AG04450 (cell line): ENCODE measurements at regions of chr9 and their contacts with region 1.

Region 1: DNA sequence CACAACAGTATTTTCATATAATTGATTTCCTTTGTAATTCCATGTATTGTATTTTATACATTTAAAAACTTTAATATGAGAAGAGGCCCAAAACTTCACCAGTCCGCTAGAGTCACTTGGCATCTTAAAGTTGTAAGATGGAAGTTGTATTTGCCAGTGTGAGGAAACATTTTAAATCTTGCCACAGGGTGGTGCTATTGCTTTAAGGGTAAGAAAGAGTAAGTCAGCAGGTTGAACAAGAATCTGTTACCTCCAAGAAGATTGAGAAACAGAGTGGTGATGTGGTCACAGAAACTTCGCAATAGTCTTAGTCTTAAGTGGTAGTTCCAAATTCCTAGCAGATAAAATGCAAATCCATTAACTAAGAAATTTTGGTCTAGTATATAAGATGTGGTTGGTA is 39.8 kb upstream of the RANBP6 start:
- DNase-seq: peak; percentile 79
- H3K4me3 ChIP-seq: no peak overlapping the region
- H3K27ac ChIP-seq: no peak overlapping the region
- H3K27me3 ChIP-seq: peaks cover 2% of the 10 kb centered on the region
- CTCF ChIP-seq: peak; percentile 71

Region 2: DNA sequence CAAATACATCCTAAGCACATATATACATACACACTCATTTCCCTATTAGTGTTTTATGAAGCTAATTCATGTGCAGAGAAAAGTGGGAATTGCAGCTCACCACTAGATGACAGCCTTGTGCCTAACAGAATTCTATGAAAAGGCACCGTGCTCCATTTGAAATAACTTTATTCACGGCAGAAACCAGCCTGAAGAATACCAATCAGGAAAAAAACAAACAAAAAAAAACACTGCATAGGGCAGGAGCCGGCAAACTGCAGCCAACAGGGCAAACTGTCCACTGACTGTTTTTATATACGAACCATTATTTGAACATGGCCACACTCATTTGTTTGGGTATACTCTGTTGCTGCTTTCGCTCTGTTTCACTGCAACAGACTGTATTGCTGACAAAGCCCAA is 255.9 kb before region 1 on chr9:
- CTCF ChIA-PET with region 1: interaction called, 19 read pairs
- POLR2A ChIA-PET with region 1: no interaction called
- DNase-seq: peak; percentile 18
- H3K4me3 ChIP-seq: no peak overlapping the region
- H3K27ac ChIP-seq: no peak overlapping the region
- H3K27me3 ChIP-seq: no peaks in the 10 kb centered on the region
- CTCF ChIP-seq: peak; percentile 89

Region 3: DNA sequence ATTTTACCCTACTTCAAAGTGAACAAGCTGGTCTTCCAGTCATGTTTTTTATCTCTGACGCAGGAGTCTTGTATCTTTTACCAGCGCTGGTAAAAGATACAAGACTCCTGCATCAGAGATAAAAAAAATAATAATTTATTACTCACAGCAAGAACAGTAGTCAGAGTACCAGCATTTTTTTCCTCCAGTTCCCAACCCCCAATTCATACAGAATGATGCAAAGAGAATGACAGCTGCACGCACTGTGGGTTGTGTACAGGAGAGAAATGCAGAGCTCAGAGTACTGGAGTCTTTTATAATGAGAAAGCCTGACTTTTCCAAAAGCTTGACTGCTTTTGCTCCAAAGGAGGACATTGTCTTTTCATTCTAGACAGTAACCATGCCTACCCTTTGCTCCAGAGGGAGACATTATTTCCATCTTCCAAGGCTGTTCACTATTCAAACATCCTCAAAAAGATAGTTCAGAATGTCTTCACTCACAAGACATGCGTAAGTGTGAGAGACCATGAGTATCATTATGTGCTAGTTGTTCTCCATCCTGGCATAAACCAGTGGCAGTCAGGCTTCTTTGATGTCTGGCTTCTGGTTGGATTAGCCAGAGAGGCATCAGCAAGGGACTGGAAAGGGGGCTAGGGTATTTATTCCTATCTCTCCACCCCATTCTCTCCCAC is 25.5 kb before region 1 on chr9:
- CTCF ChIA-PET with region 1: interaction called, 13 read pairs
- POLR2A ChIA-PET with region 1: no interaction called
- DNase-seq: no peak
- H3K4me3 ChIP-seq: no peak overlapping the region
- H3K27ac ChIP-seq: no peak overlapping the region
- H3K27me3 ChIP-seq: peaks cover 5% of the 10 kb centered on the region
- CTCF ChIP-seq: no peak

Region 4: DNA sequence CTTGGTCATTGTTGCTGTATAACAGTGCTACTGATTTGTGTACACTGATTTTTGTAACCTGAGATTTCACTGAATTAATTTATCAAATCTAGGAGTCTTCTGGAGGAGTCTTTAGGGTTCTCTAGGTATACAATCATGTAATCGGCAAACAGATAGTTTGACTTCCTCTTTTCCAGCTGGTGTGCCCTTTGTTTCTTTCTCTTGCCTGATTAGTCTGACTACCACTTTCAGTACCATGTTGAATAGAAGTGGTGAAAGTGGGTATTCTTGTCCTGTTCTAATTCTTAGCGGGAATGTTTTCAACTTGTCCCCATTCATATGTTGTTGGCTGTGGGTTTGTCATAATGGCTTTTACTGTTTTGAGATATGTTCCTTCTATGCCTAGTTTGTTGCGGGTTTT is 15.1 kb before region 1 on chr9:
- CTCF ChIA-PET with region 1: interaction called, 16 read pairs
- POLR2A ChIA-PET with region 1: no interaction called
- DNase-seq: no peak
- H3K4me3 ChIP-seq: no peak overlapping the region
- H3K27ac ChIP-seq: no peak overlapping the region
- H3K27me3 ChIP-seq: peaks cover 6% of the 10 kb centered on the region
- CTCF ChIP-seq: no peak

Region 5: GRCh38 chr9:6068983-6069382 is 13.8 kb after region 1 on chr9:
- CTCF ChIA-PET with region 1: interaction called, 21 read pairs
- POLR2A ChIA-PET with region 1: no interaction called
- DNase-seq: no peak
- H3K4me3 ChIP-seq: no peak overlapping the region
- H3K27ac ChIP-seq: no peak overlapping the region
- H3K27me3 ChIP-seq: peaks cover 3% of the 10 kb centered on the region
- CTCF ChIP-seq: no peak

Region 6: DNA sequence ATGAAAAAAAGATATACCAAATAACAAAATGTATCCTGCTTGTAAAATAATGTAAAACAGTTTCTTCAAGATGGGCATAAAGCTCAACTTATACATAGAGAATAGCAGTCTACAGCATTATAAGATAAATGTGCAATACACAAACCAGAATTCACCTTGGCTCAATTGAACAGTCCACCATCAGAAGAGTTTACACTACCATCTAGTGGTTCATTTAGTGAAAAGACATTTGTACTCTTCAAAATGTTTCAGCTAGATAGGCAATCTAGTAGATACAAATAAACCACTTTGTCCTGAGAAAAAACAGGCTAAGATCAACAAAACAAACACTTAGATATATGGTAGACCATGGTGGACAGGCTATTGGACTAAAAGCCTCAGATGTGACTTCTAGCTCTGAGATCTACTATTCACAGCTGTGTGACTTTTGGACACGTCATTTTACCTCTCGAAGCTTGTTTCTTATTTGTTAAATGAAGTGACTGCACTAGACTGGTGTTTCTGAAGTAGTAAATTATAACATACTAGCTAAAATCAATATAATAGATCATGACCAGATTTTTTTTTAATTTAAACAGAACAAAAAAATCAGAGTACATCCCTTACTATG is 250.8 kb after region 1 on chr9:
- CTCF ChIA-PET with region 1: interaction called, 142 read pairs
- POLR2A ChIA-PET with region 1: no interaction called
- DNase-seq: peak; percentile 13
- H3K4me3 ChIP-seq: no peak overlapping the region
- H3K27ac ChIP-seq: no peak overlapping the region
- H3K27me3 ChIP-seq: no peaks in the 10 kb centered on the region
- CTCF ChIP-seq: peak; percentile 61

Region 7: DNA sequence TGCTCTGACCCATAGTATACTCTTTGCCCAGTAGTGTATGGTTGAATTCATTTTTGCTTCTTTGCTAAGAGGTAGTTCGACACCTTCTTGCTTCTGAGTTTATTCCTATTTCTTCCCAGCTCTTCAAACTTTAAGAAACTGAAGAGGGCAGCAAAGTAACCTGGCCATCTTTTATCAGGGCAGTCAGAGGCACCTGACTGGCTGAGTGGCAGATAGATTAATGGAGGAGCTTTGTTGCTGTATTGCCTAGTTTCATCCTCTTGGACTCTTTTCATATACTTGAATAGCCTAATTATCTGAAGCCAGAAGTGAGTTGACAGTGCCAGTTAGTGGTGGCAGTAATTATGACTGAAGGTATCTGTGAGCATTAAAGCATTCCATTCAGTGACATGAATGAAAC is 440.3 kb after region 1 on chr9:
- CTCF ChIA-PET with region 1: no interaction called
- POLR2A ChIA-PET with region 1: no interaction called
- DNase-seq: no peak
- H3K4me3 ChIP-seq: no peak overlapping the region
- H3K27ac ChIP-seq: no peak overlapping the region
- H3K27me3 ChIP-seq: no peaks in the 10 kb centered on the region
- CTCF ChIP-seq: no peak